ENCODE measurements at regions of chr1 and their contacts with region 1.

Region 1: DNA sequence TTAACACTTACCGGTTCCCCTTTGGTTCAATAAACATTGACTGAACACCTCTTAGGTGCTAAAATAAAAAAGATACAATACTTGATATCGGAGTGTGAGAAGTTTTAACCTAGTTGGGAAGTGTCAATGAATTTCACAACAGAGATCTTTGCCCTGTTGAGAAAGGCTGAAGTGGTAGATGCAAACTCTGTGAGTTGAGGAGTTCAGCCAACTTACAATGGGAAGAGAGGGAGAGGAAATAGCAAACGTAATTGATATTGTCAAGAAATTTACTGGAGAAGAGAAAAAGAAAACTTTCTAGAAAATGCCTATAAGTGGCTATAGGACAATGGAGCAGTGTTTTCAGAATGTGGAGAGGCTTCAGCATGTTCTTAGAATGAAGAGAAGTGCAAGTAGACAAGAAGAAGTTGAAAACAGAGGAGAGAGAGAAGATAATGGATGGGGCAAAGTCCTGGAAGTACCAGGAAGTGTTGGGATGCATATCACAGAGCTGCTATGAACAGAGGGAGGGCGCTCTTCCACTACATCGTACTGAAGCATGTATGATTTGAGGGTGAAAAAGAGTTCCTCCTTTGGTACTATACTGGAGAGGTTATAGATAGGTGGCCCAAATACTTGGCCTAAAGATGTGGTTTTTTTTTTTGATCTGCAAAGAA is 48.9 kb downstream of the MEF2D start:
- DNase-seq: no peak
- ATAC-seq: no peak
- H3K4me3 Mint-ChIP-seq: no peak overlapping the region
- H3K27ac Mint-ChIP-seq: no peak overlapping the region
- H3K4me1 Mint-ChIP-seq: peaks cover 16% of the 10 kb centered on the region
- H3K27me3 Mint-ChIP-seq: no peaks in the 10 kb centered on the region
- CTCF ChIP-seq: no peak

Region 2: DNA sequence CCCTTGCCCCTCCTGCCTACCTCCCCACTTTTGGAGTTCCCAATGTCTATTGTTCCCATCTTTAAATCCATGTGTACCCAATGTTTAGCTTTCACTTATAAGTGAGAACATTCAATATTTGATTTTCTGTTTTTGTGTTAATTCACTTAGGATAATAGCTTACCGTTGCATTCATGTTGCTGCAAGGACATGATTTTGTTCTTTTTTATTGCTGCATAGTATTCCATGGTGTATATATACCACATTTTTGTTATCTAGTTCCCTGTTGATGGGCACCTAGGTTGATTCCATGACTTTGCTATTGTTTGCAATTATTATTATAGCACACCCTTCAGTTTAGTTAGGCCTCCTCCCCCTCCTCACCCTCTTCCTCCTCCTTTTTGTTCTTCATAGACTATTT is 1810.1 kb before region 1 on chr1:
- CTCF ChIA-PET with region 1: no interaction called
- POLR2A ChIA-PET with region 1: interaction called, 10 read pairs
- DNase-seq: no peak
- ATAC-seq: no peak
- H3K4me3 Mint-ChIP-seq: no peak overlapping the region
- H3K27ac Mint-ChIP-seq: no peak overlapping the region
- H3K4me1 Mint-ChIP-seq: no peaks in the 10 kb centered on the region
- H3K27me3 Mint-ChIP-seq: 0 out of 2 replicates have a peak, but pooled peaks cover under 1% of the 10 kb centered on the region
- CTCF ChIP-seq: no peak

Region 3: GRCh38 chr1:156560585-156561183 is 109.1 kb after region 1 on chr1:
- CTCF ChIA-PET with region 1: no interaction called
- POLR2A ChIA-PET with region 1: no interaction called
- DNase-seq: no peak
- ATAC-seq: no peak
- H3K4me3 Mint-ChIP-seq: no peak overlapping the region
- H3K27ac Mint-ChIP-seq: no peak overlapping the region
- H3K4me1 Mint-ChIP-seq: no peaks in the 10 kb centered on the region
- H3K27me3 Mint-ChIP-seq: no peaks in the 10 kb centered on the region
- CTCF ChIP-seq: no peak